Esophagus muscularis mucosa (tissue), 4 donors: ENCODE measurements at regions of chr1 and their contacts with region 1.

Region 1: GRCh38 chr1:29235955-29236684 is at the start of gene PTPRU:
- DNase-seq: no peak
- H3K4me3 ChIP-seq: peak within 1 kb of the TSS; percentile 54 to 92 (median 70)
- H3K27ac ChIP-seq: peak within 1 kb of the TSS; percentile 64 to 77 (median 74)
- H3K4me1 ChIP-seq: peaks cover 6 to 33% (median 30%) of the 10 kb centered on the region in 4 donors
- H3K27me3 ChIP-seq: peaks cover 0 to 16% (median 0%) of the 10 kb centered on the region in 4 donors
- CTCF ChIP-seq: peak; percentile 88 to 97 (median 94)
- EP300 ChIP-seq: no peak
- POLR2A ChIP-seq: no peak
- total RNA-seq, gene PTPRU: 19.5 to 32.7 (median 27.5) TPM

Region 2: DNA sequence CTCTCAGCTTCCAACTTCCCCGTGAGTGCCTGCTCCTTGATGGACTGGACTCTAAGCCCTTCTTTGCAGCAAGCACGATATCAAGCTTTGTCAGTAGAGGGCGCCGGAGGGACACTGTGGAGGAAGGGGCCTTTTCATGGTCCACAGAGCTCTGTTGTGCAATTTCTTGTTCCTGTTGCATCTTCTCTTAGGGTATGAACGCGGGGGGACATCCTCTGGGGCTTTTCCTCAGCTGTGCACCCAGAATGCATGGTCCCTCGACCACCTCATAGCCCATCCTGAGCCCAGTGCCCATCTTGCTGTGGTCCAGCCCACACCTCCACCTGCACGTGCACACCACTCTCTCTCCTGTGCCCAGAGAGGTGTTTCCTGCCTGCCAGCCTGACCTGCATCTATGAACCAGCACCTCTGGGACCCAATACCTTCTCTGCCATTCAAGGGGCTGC is 557.0 kb after region 1 on chr1:
- intact Hi-C with region 1: loop called (anchors 5 kb)
- DNase-seq: peak; percentile 94
- H3K4me3 ChIP-seq: no peak overlapping the region
- H3K27ac ChIP-seq: no peak overlapping the region
- H3K4me1 ChIP-seq: no peaks in the 10 kb centered on the region
- H3K27me3 ChIP-seq: peaks cover 0 to 27% (median 0%) of the 10 kb centered on the region in 4 donors
- CTCF ChIP-seq: peak; percentile 59 to 80 (median 68)
- EP300 ChIP-seq: no peak
- POLR2A ChIP-seq: no peak

Region 3: GRCh38 chr1:29849038-29849750 is 613.1 kb after region 1 on chr1:
- intact Hi-C with region 1: loop called (anchors 5 kb)
- DNase-seq: no peak
- H3K4me3 ChIP-seq: no peak overlapping the region
- H3K27ac ChIP-seq: no peak overlapping the region
- H3K4me1 ChIP-seq: no peaks in the 10 kb centered on the region
- H3K27me3 ChIP-seq: peaks cover 0 to 75% (median 0%) of the 10 kb centered on the region in 4 donors
- CTCF ChIP-seq: peak; percentile 20 to 37 (median 35)
- EP300 ChIP-seq: no peak
- POLR2A ChIP-seq: no peak

Region 4: GRCh38 chr1:30085811-30086770 is 850.0 kb after region 1 on chr1:
- intact Hi-C with region 1: loop called (anchors 5 kb)
- DNase-seq: no peak
- H3K4me3 ChIP-seq: peak overlapping the region; percentile 11 to 45 (median 22)
- H3K27ac ChIP-seq: no peak overlapping the region
- H3K4me1 ChIP-seq: peaks cover 22 to 36% (median 35%) of the 10 kb centered on the region in 4 donors
- H3K27me3 ChIP-seq: peaks cover 0 to 49% (median 4%) of the 10 kb centered on the region in 4 donors
- CTCF ChIP-seq: peak; percentile 62 to 76 (median 66)
- EP300 ChIP-seq: no peak
- POLR2A ChIP-seq: no peak

Region 5: DNA sequence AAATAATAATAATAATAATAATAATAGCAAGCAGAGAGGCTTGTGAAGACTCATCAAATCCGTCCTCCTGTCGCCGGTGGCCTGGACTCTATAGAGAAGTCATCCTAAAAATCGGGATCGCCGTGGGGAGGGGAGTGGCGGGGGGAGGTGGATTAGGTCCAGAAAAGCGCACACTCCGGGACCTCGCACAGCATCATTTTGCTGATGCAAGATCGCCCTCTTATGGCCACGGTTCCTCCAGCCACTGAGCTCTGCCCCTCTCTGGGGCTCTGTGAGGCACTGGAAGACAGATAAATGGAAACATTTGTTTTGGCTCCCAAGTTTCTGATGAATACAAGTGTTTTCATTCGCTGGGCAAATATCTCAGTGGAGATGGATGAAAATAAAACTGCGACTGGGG is 875.3 kb after region 1 on chr1:
- intact Hi-C with region 1: loop called (anchors 2 kb)
- DNase-seq: no peak
- H3K4me3 ChIP-seq: no peak overlapping the region
- H3K27ac ChIP-seq: no peak overlapping the region
- H3K4me1 ChIP-seq: peaks cover 0 to 5% (median 0%) of the 10 kb centered on the region in 4 donors
- H3K27me3 ChIP-seq: peaks cover 0 to 83% (median 0%) of the 10 kb centered on the region in 4 donors
- CTCF ChIP-seq: peak; percentile 31 to 49 (median 36)
- EP300 ChIP-seq: no peak
- POLR2A ChIP-seq: no peak

Region 6: DNA sequence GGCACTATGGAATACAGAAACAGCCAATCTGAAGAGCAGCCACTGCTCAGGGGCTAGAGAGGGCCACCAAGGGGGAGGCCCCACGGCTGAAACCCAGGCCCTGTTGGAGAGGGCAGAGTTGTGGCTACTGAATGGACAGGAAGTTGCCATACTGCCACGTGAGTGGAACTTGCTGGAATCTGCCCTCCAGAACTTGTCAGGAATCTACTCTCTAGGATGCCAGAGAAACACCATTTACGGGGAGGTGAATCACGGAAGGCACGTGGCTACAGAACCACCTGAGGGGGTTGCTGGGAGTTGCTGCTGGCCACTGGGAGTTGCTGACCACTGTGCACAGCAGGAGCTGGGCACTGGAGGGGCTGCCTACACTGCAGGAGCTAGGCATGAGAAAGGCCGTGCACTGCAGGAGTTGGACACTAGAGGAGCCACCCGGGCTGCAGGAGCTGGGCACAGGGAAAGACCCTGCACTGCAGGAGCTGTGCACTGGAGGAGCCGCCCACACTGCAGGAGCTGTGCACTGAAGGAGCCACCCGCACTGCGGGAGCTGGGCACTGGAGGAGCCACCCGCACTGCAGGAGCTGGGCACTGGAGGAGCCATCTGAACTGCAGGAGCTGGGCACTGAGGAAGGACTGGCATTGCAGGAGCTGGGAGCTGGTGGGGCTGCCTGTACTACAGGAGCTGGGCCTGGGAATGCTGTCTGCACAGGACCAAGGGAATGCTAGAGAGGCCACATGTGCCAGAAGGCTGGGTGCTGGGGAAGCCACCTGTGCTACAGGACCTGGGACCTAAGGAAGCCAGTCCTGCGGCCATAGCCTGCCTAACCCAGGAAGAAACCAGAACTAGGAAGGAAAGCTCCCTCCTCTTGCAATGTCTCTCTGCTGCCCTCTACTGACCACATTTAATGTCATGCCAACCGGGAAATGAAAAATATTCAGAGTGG is 1143.8 kb after region 1 on chr1:
- intact Hi-C with region 1: loop called (anchors 2 kb)
- DNase-seq: no peak
- H3K4me3 ChIP-seq: no peak overlapping the region
- H3K27ac ChIP-seq: no peak overlapping the region
- H3K4me1 ChIP-seq: peaks cover 0 to 8% (median 7%) of the 10 kb centered on the region in 4 donors
- H3K27me3 ChIP-seq: peaks cover 0 to 82% (median 6%) of the 10 kb centered on the region in 4 donors
- CTCF ChIP-seq: peak; percentile 71 to 88 (median 80)
- EP300 ChIP-seq: no peak
- POLR2A ChIP-seq: no peak

Region 7: GRCh38 chr1:30707412-30708360 is 1471.6 kb after region 1 on chr1:
- intact Hi-C with region 1: loop called (anchors 2 kb)
- DNase-seq: no peak
- H3K4me3 ChIP-seq: no peak overlapping the region
- H3K27ac ChIP-seq: no peak overlapping the region
- H3K4me1 ChIP-seq: peaks cover 16 to 41% (median 32%) of the 10 kb centered on the region in 4 donors
- H3K27me3 ChIP-seq: no peaks in the 10 kb centered on the region
- CTCF ChIP-seq: peak; percentile 69 to 97 (median 83)
- EP300 ChIP-seq: no peak
- POLR2A ChIP-seq: no peak